ENCODE measurements at regions of chr17 and their contacts with region 1.

Region 1: GRCh38 chr17:20121359-20122253 is 112.4 kb downstream of the SPECC1 start:
- DNase-seq: peak; percentile 68 to 82
- ATAC-seq: peak; percentile 89 to 90
- H3K4me3 ChIP-seq: no peak overlapping the region
- H3K27ac ChIP-seq: peak overlapping the region; percentile 34 to 68; a peak in 3 of 6 replicates
- H3K4me1 ChIP-seq: peaks cover 10% of the 10 kb centered on the region
- CTCF ChIP-seq: peak; percentile 99
- EP300 ChIP-seq: no peak
- POLR2A ChIP-seq: no peak
- RAD21 ChIP-seq: peak; percentile 98 to 99

Region 2: GRCh38 chr17:20009302-20010098 is 112.1 kb before region 1 on chr17 and contains the start of gene SPECC1:
- CTCF ChIA-PET with region 1: interaction called, 28 read pairs
- POLR2A ChIA-PET with region 1: interaction called, 8 read pairs
- DNase-seq: peak; percentile 48 to 87
- ATAC-seq: peak; percentile 85 to 94
- H3K4me3 ChIP-seq: peak within 1 kb of the TSS; percentile 63
- H3K27ac ChIP-seq: peak within 1 kb of the TSS; percentile 88 to 93
- H3K4me1 ChIP-seq: peaks cover 25% of the 10 kb centered on the region
- CTCF ChIP-seq: peak; percentile 16; the same call in 2 of the 3 replicates
- EP300 ChIP-seq: no peak
- POLR2A ChIP-seq: peak; percentile 41; the same call in 1 of the 2 replicates
- RAD21 ChIP-seq: peak; percentile 37 to 64; a peak in 3 of 5 replicates
- polyA plus RNA-seq, gene SPECC1: 40.1 and 45.1 TPM in 2 replicates

Region 3: GRCh38 chr17:20103454-20104446 is 17.9 kb before region 1 on chr17:
- CTCF ChIA-PET with region 1: interaction called, 16 read pairs
- POLR2A ChIA-PET with region 1: no interaction called
- DNase-seq: no peak
- ATAC-seq: peak in 1 of 2 experiments; percentile 46; a peak in 2 of 6 replicates
- H3K4me3 ChIP-seq: no peak overlapping the region
- H3K27ac ChIP-seq: peak overlapping the region; percentile 33 to 51; a peak in 3 of 6 replicates
- H3K4me1 ChIP-seq: peaks cover 9% of the 10 kb centered on the region; the same call in 2 of the 3 replicates
- CTCF ChIP-seq: no peak
- EP300 ChIP-seq: no peak
- POLR2A ChIP-seq: no peak
- RAD21 ChIP-seq: no peak

Region 4: GRCh38 chr17:20149251-20149650 is 27.6 kb after region 1 on chr17:
- CTCF ChIA-PET with region 1: interaction called, 16 read pairs
- POLR2A ChIA-PET with region 1: no interaction called
- DNase-seq: no peak
- ATAC-seq: no peak
- H3K4me3 ChIP-seq: no peak overlapping the region
- H3K27ac ChIP-seq: no peak overlapping the region
- H3K4me1 ChIP-seq: no peaks in the 10 kb centered on the region
- CTCF ChIP-seq: no peak
- EP300 ChIP-seq: no peak
- POLR2A ChIP-seq: no peak
- RAD21 ChIP-seq: no peak

Region 5: GRCh38 chr17:20197527-20197926 is 75.9 kb after region 1 on chr17:
- CTCF ChIA-PET with region 1: interaction called, 10 read pairs
- POLR2A ChIA-PET with region 1: no interaction called
- DNase-seq: no peak
- ATAC-seq: no peak
- H3K4me3 ChIP-seq: no peak overlapping the region
- H3K27ac ChIP-seq: no peak overlapping the region
- H3K4me1 ChIP-seq: peaks cover 28% of the 10 kb centered on the region
- CTCF ChIP-seq: no peak
- EP300 ChIP-seq: no peak
- POLR2A ChIP-seq: no peak
- RAD21 ChIP-seq: no peak

Region 6: DNA sequence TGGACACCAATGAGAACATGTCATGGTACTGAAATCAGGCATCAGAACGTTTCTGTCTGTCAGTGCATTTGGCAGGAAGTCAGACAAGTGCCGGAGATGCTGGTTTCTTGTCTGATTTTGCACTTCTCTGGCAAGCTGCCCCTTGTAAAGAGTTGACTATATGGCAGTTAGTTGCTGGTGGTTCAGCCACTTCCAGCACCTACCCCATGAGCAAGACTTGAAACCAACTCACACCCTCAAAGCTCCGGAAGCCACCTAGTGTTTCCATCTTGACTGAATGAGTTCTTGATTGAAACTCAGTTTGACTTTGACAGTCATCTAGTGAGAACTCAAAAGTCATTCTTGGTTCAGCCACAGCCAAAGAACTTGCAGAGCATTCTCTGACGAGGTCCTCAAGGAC is 112.7 kb after region 1 on chr17:
- CTCF ChIA-PET with region 1: interaction called, 49 read pairs
- POLR2A ChIA-PET with region 1: no interaction called
- DNase-seq: no peak
- ATAC-seq: no peak
- H3K4me3 ChIP-seq: no peak overlapping the region
- H3K27ac ChIP-seq: no peak overlapping the region
- H3K4me1 ChIP-seq: no peaks in the 10 kb centered on the region
- CTCF ChIP-seq: no peak
- EP300 ChIP-seq: no peak
- POLR2A ChIP-seq: no peak
- RAD21 ChIP-seq: no peak

Region 7: DNA sequence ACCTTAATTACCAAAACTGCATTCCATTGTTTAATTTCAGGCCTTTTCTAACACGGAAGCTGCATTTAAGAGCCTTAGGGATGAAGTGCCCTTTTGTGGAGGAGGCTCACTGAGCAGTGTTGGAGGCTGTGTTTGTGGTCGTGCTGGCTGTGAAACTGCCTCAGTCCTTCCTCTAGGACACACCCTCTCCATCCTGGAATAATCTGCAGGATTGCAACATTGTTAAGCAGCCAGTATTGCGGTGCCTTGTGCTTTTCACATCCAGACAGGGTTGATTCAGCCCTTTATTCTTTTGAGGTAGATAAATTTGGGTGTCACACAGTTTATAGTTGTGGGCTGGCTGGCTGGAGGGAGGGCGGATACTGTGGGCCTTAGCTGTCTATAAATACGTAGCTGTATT is 599.6 kb after region 1 on chr17:
- CTCF ChIA-PET with region 1: no interaction called
- POLR2A ChIA-PET with region 1: no interaction called
- DNase-seq: no peak
- ATAC-seq: peak; percentile 24 to 43; a peak in 2 of 6 replicates
- H3K4me3 ChIP-seq: no peak overlapping the region
- H3K27ac ChIP-seq: no peak overlapping the region
- H3K4me1 ChIP-seq: no peaks in the 10 kb centered on the region
- CTCF ChIP-seq: no peak
- EP300 ChIP-seq: no peak
- POLR2A ChIP-seq: no peak
- RAD21 ChIP-seq: no peak

Region 8: DNA sequence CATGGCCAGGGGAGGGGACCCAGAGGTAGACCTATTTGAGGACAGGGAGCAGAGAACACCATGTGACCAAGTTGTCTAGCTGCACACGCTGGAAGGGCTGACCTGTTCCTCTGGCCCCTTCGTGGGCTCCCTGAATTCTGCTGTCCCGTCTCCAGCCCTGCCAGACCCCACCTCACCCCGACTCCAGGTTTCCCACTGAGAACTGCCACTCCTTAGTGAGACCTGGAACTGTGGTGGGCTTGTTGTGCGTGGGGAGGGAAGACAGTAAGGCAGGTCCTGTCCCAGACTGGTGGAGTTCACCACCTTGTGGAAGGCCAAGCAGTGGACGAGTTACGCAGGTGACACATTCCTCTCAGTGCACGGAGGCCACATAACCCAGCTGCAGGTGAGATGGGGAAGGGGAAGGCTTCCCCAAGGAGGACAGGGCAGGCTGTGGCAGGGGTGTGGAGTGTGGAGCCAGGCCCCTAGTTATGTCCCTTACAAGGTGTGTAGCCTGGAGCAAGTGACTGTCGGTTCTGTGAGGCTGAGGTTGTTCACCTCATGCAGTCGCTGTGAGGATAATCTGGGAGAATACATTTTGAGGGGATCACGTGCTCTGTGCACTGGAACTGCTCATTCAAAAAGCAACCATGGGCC is 866.5 kb after region 1 on chr17:
- CTCF ChIA-PET with region 1: no interaction called
- POLR2A ChIA-PET with region 1: no interaction called
- DNase-seq: no peak
- ATAC-seq: no peak
- H3K4me3 ChIP-seq: no peak overlapping the region
- H3K27ac ChIP-seq: no peak overlapping the region
- H3K4me1 ChIP-seq: 0 out of 3 replicates have a peak, but pooled peaks cover 2% of the 10 kb centered on the region
- CTCF ChIP-seq: no peak
- EP300 ChIP-seq: no peak
- POLR2A ChIP-seq: no peak
- RAD21 ChIP-seq: no peak

Measured in A549 (cell line).